H1 (cell line): ENCODE measurements at regions of chr3 and their contacts with region 1.

Region 1: GRCh38 chr3:185858502-185859225 is 33.8 kb upstream of the IGF2BP2 start:
- DNase-seq: no peak
- H3K4me3 ChIP-seq: no peak overlapping the region
- H3K27ac ChIP-seq: no peak overlapping the region
- H3K4me1 ChIP-seq: no peaks in the 10 kb centered on the region
- H3K27me3 ChIP-seq: no peaks in the 10 kb centered on the region
- CTCF ChIP-seq: no peak
- EP300 ChIP-seq: no peak
- POLR2A ChIP-seq: no peak
- RAD21 ChIP-seq: no peak

Region 2: DNA sequence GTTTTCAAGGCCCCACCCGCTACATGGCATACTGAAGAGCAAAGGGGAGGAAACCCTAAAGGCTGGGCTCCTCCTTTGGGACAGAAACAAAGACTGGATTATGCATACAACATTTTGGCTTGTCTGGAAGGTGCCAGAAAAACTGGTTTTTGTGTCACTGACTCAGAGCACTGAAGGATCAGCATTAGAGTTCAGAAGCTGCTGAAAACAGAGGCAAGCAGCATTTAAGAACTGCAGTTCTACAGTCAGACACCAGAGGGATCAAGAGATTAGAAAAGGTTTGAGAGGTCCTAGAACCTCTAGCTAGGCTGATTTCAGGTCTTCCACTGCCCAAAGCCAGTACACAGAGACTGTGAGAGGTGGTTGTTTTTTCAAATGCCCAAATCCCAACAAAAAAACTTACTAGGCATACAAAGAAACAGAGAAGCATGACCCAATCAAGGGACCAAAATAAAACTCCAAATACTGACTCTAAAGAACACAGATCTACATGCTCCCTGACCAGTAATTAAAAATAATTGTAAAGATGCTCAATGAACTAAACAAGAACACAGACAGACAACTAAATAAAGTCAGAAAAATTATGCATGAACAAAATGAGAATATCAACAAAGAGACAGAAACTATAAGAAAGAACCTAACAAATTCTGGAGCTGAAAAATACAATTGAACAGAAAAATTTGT is 181.4 kb before region 1 on chr3:
- CTCF ChIA-PET with region 1: no interaction called
- POLR2A ChIA-PET with region 1: no interaction called
- DNase-seq: no peak
- H3K4me3 ChIP-seq: no peak overlapping the region
- H3K27ac ChIP-seq: no peak overlapping the region
- H3K4me1 ChIP-seq: no peaks in the 10 kb centered on the region
- H3K27me3 ChIP-seq: no peaks in the 10 kb centered on the region
- CTCF ChIP-seq: peak in 2 of 3 experiments; percentile 71 to 83; a peak in 3 of 4 replicates
- EP300 ChIP-seq: no peak
- POLR2A ChIP-seq: no peak
- RAD21 ChIP-seq: peak; percentile 79 to 85

Region 3: DNA sequence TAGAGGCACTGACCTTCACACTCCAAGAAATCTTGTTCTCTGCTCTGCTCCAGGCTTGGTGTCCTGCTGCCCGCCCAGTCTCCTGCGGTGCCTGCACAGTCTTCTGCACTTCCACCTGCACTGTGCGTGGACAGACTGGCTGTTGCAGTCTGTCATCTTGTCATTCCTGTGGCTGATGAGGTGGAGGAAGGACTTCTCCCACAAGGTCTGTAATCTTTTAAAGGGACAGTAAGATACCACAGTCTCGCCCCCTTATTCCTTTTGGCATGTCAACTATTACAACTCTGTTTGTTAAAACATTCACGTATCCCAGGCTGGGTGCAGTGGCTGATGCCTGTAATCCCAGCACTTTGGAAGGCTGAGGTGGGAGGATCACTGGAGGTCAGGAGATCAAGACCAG is 20.3 kb after region 1 on chr3:
- CTCF ChIA-PET with region 1: interaction called, 11 read pairs
- POLR2A ChIA-PET with region 1: interaction called, 3 read pairs
- DNase-seq: no peak
- H3K4me3 ChIP-seq: no peak overlapping the region
- H3K27ac ChIP-seq: no peak overlapping the region
- H3K4me1 ChIP-seq: peaks cover 0 to 4% (median 1%) of the 10 kb centered on the region in 4 experiments; a peak in 2 of 7 replicates
- H3K27me3 ChIP-seq: no peaks in the 10 kb centered on the region
- CTCF ChIP-seq: no peak
- EP300 ChIP-seq: no peak
- POLR2A ChIP-seq: no peak
- RAD21 ChIP-seq: no peak